HEK293T (cell line): ENCODE measurements at regions of chr19 and their contacts with region 1.

Region 1: GRCh38 chr19:8334458-8335342 is 8.4 kb downstream of the KANK3 start:
- DNase-seq: peak; percentile 78

Region 2: DNA sequence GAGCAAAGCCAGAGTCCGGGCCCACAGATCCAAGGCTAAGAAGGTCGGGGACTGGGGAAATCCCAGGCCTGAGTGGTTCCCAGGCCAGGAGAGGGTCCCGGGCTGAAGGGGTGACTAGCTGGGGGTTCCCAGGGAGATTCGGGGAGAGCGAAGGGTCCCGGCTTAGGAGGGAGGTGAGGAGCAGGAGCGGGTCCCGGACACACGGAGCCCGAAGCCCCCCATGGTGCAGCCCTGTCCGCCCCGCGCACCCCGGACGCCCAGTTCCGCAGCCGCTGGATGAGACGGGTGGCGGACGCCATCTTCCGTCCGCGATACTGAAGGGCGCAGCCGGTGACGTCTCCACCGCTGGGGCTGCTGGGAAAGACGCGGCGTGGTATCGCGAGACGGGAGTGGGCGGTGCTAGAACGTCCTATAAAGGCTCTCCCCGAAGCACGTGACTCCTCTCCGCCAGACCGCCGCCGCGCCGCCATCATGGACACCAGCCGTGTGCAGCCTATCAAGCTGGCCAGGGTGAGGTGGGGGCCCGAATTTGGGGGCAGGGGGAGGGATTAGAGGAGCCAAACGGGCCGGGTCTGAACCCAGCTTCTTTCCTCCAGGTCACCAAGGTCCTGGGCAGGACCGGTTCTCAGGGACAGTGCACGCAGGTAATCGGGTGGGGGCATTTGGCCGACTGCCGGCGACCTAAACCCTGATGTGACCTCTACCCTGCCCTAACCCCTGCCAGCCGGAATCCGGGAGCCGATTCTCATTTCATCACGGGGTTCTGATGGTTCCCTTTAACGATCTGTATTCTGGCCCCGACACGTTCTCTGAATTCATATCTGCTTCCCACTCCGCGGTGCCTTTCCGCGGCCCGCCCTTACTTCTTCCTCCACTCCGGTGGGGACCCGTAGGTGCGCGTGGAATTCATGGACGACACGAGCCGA is 13.4 kb before region 1 on chr19 and contains the starts of genes NDUFA7 and RPS28:
- CTCF ChIA-PET with region 1: no interaction called
- POLR2A ChIA-PET with region 1: interaction called, 30 read pairs
- DNase-seq: peak; percentile 97